CD4-positive, alpha-beta T cell (primary cell): ENCODE measurements at regions of chr2 and their contacts with region 1.

Region 1: DNA sequence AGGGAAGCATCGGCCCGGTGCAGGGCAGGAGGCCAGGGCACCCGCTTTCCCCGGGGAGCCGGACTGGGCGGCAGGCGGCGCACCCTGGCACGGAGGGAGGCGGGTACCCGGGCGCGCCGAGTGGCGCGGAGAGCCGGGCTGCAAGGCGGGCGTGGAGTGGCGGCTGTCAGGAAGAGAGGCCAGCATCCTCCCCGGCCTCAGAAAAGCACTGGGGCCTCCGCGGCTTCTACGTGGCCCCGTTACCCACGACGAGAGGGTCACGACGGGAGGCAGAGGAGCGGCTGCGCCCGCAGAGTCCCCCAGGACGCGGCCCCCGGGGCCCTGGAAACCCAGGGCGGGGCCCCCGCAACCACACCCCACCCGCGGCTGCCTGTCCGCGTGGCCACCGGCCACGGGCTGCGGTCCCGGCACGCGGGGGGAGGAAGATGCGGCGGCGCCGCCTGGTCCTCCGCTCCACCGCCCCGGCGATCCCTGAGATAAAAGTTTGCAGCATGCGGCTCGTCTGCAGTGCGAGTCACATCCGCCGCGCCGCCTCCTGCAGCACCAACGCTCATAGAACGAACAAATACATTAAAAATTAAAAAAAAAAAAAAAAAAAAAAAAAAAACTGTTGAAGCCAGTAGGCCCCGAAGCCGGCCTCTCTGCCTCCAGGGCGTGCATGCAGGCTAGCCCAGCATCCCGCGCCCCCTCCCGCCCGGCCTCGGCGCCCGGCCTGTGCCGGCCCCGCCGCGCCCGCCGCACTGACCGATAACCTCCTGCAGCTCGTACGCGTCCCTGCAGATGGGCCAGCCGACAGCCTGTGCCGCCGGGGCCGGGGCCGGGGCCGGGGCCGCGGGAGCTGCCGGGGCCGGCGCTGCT is 683 bp downstream of the STK39 start:
- DNase-seq: peak; percentile 60 to 93 (median 78)
- ATAC-seq: peak; percentile 71
- H3K4me3 ChIP-seq: peak overlapping the region; percentile 73
- H3K4me3 Mint-ChIP-seq: peak overlapping the region; percentile 94
- H3K27ac ChIP-seq: peak overlapping the region; percentile 11 to 78
- H3K27ac Mint-ChIP-seq: peak overlapping the region; percentile 88
- H3K4me1 ChIP-seq: peaks cover 35% of the 10 kb centered on the region
- H3K4me1 Mint-ChIP-seq: peaks cover 41% of the 10 kb centered on the region
- H3K27me3 ChIP-seq: no peaks in the 10 kb centered on the region
- H3K27me3 Mint-ChIP-seq: no peaks in the 10 kb centered on the region
- CTCF ChIP-seq: no peak

Region 2: DNA sequence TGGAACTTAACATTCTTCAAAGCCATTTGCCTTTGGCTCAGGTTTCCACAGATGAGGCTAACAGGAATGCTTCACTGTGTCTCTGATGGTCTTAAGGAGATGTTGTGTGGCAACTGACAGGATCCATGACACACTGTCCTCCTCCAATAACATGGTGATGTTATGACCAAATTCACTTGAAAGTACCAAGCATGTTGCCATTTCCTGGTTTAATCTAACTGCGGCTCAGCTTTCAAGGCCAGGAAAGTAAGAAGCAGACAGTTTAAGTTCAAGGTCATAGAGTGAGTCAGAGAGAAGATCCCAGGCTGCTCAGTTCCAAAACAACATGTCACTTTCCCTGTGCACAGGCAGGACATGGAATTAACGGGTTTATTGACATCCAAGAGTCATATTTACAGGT is 513.0 kb before region 1 on chr2:
- CTCF ChIA-PET with region 1: no interaction called
- POLR2A ChIA-PET with region 1: no interaction called
- intact Hi-C with region 1: no loop called
- DNase-seq: no peak
- ATAC-seq: no peak
- H3K4me3 ChIP-seq: no peak overlapping the region
- H3K4me3 Mint-ChIP-seq: no peak overlapping the region
- H3K27ac ChIP-seq: no peak overlapping the region
- H3K27ac Mint-ChIP-seq: no peak overlapping the region
- H3K4me1 ChIP-seq: no peaks in the 10 kb centered on the region
- H3K4me1 Mint-ChIP-seq: no peaks in the 10 kb centered on the region
- H3K27me3 ChIP-seq: no peaks in the 10 kb centered on the region
- H3K27me3 Mint-ChIP-seq: no peaks in the 10 kb centered on the region
- CTCF ChIP-seq: no peak

Region 3: DNA sequence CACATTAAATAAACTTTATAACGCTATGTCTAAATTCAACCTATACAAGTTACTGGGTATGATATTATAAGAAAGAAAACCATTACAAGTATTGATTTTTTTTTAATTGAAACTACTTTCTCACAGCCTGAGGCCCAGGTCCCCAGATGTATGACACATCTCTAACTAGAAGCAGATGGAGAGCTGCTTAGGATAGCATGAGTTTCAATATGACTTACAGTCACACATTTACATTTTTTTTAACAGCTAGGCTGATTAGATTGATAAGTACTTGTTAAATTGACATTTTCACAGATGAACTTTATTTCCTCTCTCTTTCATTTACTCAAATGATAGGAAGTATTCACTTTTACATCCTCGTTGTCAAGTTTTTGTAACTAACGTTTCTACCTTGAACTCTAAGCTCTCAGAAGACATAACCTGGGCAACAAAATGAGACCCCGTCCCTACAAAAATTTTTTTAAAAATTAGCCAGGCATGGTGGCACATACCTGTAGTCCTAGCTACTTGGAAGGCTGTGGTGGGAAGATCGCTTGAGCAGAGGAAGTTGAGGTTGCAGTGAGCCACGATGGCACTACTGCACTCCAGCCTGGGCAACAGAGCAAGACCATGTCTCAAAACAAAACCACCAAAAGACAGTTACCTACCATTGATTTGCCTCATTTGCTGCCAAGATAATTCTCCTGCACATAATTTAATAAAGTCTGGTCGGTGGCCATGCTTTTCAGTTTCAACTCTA is 51.8 kb before region 1 on chr2:
- CTCF ChIA-PET with region 1: no interaction called
- POLR2A ChIA-PET with region 1: interaction called, 3 read pairs
- intact Hi-C with region 1: loop called (anchors 2 to 5 kb)
- DNase-seq: peak in 5 of 14 experiments; percentile 3 to 61 (median 36)
- ATAC-seq: peak; percentile 33
- H3K4me3 ChIP-seq: no peak overlapping the region
- H3K4me3 Mint-ChIP-seq: peak overlapping the region; percentile 53
- H3K27ac ChIP-seq: peak overlapping the region; percentile 23 to 34
- H3K27ac Mint-ChIP-seq: peak overlapping the region; percentile 81
- H3K4me1 ChIP-seq: peaks cover 43% of the 10 kb centered on the region
- H3K4me1 Mint-ChIP-seq: peaks cover 49% of the 10 kb centered on the region
- H3K27me3 ChIP-seq: no peaks in the 10 kb centered on the region
- H3K27me3 Mint-ChIP-seq: no peaks in the 10 kb centered on the region
- CTCF ChIP-seq: no peak

Region 4: DNA sequence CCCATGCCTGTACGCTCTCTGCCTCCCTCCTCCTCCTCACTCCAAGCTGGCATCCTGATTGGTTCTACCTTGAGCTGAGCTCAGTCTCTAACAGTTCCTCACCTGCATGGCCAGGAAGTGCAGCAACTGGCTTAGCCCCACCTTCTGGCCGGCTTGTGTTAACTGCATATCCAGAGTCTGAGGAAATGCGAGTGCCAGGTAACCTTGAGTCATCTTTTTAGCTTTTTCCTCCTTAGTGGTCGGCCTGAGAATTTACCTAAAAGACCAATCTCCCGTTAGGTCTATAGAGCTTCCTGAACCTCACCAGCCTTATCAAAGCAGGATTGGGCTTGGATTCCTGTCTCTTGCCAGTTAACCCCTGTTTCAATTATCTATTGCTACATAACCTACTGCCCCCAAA is 90.2 kb after region 1 on chr2:
- CTCF ChIA-PET with region 1: no interaction called
- POLR2A ChIA-PET with region 1: no interaction called
- intact Hi-C with region 1: loop called in 1 of 2 experiments (anchors 5 kb)
- DNase-seq: peak; percentile 36 to 79 (median 53)
- ATAC-seq: peak; percentile 98
- H3K4me3 ChIP-seq: no peak overlapping the region
- H3K4me3 Mint-ChIP-seq: no peak overlapping the region
- H3K27ac ChIP-seq: no peak overlapping the region
- H3K27ac Mint-ChIP-seq: no peak overlapping the region
- H3K4me1 ChIP-seq: peaks cover 6% of the 10 kb centered on the region
- H3K4me1 Mint-ChIP-seq: no peaks in the 10 kb centered on the region
- H3K27me3 ChIP-seq: peaks cover 0 to 5% of the 10 kb centered on the region in 2 experiments
- H3K27me3 Mint-ChIP-seq: no peaks in the 10 kb centered on the region
- CTCF ChIP-seq: peak; percentile 50

Region 5: GRCh38 chr2:168594778-168595177 is 348.1 kb after region 1 on chr2:
- CTCF ChIA-PET with region 1: no interaction called
- POLR2A ChIA-PET with region 1: no interaction called
- intact Hi-C with region 1: no loop called
- DNase-seq: no peak
- ATAC-seq: no peak
- H3K4me3 ChIP-seq: no peak overlapping the region
- H3K4me3 Mint-ChIP-seq: no peak overlapping the region
- H3K27ac ChIP-seq: no peak overlapping the region
- H3K27ac Mint-ChIP-seq: no peak overlapping the region
- H3K4me1 ChIP-seq: peaks cover 3% of the 10 kb centered on the region
- H3K4me1 Mint-ChIP-seq: peaks cover 60% of the 10 kb centered on the region
- H3K27me3 ChIP-seq: no peaks in the 10 kb centered on the region
- H3K27me3 Mint-ChIP-seq: no peaks in the 10 kb centered on the region
- CTCF ChIP-seq: no peak

Region 6: DNA sequence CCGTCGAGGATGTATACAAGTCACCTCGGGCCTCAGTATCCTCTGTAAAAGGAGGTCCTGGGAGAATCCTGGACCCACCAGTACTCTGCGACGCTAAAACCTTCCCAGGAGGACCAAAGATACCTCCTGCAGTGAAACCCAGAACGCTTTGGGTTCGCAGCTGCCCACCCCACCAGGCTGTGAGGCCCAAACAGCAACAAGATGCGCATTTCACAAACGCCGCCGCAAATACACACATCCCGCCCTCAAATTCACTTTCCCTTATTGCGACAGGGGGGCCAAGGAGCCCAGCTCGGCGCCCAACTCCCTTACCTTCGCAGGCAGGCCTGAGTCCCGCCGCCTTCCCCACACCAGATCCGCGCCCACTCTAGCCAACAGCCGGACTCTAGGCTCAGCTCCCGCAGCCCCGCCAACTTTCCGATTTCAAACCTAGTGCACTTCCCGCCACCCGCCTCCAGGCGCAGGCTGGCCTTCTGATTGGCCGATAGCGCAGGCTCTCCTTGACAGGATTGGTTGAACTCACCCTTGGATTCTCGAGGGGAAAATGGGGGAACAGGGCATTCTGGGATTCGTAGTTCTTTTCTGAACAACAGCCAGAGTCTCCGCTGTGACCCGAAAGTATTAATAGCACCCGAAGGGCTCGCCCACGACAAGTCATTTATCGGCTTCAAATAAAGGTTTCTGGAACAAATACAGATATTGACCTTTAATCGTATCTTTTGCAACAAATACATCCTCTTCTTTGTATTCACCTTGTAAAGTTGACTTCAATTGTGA is 643.5 kb after region 1 on chr2 and contains the start of gene SPC25:
- CTCF ChIA-PET with region 1: no interaction called
- POLR2A ChIA-PET with region 1: no interaction called
- intact Hi-C with region 1: loop called in 1 of 2 experiments (anchors 5 kb)
- DNase-seq: peak; percentile 73 to 93 (median 80)
- ATAC-seq: peak; percentile 100
- H3K4me3 ChIP-seq: peak within 1 kb of the TSS; percentile 70
- H3K4me3 Mint-ChIP-seq: peak within 1 kb of the TSS; percentile 93
- H3K27ac ChIP-seq: no peak within 1 kb of the TSS
- H3K27ac Mint-ChIP-seq: no peak within 1 kb of the TSS
- H3K4me1 ChIP-seq: peaks cover 6% of the 10 kb centered on the region
- H3K4me1 Mint-ChIP-seq: peaks cover 10% of the 10 kb centered on the region
- H3K27me3 ChIP-seq: no peaks in the 10 kb centered on the region
- H3K27me3 Mint-ChIP-seq: peaks cover 4% of the 10 kb centered on the region
- CTCF ChIP-seq: no peak
- total RNA-seq, gene SPC25: 0.17 TPM in 1 of 2 experiments, not detected in the other